CD14-positive monocyte (primary cell): ENCODE measurements at regions of chr6 and their contacts with region 1.

Region 1: DNA sequence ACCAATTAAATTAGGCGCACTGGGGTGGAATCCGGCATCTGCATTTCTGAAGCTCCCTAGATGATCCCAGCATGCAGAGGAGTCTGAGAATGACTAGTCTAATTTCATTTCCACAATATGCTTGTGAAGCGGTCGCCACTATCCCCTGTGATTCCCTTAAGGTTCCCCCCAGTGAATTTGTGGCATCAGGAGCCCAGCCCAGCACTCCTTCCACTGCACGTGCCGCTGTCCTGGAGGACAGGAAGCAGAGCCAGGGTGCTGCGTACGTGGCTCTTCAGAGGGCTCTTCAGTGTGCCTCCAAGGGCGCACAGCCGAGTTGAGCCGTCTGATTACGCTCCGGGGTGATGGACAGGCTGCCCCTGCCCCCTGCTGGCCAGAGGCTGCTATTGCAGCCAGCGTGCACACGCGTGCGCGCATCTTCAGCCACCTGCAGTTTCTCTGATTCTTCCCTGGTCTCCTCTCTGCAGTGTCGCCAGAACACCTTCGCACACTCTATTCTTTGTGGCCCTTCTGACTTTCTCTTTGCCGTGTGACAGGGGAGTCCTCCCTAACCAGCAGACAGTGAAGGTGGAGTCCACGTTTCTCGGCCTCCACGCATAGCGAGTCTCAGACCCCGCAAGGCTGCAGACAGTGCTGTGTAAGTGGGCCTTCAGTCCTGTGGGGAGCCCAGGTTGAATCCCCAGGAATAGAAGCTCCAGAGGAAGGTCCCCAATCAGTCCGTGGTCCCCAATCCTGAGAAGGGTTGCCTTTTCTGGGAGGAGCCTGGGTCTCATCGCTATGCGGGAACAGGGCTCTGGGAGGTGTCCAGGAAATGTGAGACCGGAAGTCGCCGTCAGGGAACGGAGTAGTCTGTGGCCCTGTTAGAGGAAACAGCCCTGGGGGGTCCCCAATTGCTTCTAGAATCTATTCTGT is 16.5 kb upstream of the NCR2 start:
- DNase-seq: peak; percentile 82 to 90 (median 85)
- H3K4me3 ChIP-seq: peak overlapping the region; percentile 27 to 71 (median 29)
- H3K4me3 Mint-ChIP-seq: peak overlapping the region; percentile 74 to 85
- H3K27ac ChIP-seq: peak overlapping the region in 1 of 2 donors; percentile 28
- H3K27ac Mint-ChIP-seq: peak overlapping the region; percentile 24 to 89 (median 75)
- H3K4me1 ChIP-seq: peaks cover 11% of the 10 kb centered on the region in 2 donors
- H3K4me1 Mint-ChIP-seq: peaks cover 13% of the 10 kb centered on the region
- H3K27me3 ChIP-seq: peaks cover 6 to 8% of the 10 kb centered on the region in 2 donors
- H3K27me3 Mint-ChIP-seq: peaks cover 6 to 19% (median 14%) of the 10 kb centered on the region in 3 donors
- CTCF ChIP-seq: peak; percentile 99

Region 2: DNA sequence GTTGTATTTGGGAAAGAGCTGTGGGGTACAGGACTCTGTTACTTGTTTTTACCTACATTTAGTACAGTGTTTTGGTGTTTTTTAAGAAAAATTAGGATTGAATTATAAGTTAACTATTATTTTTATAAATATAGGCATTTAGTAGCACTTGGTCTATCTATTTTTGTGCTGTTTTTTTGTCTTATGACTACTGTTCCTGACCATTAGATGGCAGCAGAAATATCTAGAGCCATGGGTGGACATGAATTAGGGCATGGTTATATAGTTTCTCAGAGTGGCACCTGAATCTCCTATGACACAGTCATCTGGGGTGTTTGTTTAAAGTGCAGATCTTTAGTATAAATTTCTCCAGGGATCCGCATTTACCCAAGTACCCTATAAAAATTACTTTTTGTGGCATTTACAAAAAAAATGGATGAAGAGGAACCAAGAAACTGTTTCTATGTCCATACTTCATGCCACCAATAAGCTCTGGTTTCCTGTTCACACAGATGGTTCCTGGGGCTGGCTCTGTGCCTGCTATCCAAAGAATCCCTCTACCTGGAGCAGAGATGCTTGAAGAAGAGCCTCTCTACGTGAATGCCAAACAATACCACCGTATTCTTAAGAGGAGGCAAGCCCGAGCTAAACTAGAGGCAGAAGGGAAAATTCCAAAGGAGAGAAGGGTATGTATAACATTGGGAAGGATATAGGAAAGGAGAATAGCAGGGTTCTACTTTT is 226.3 kb before region 1 on chr6:
- intact Hi-C with region 1: loop called (anchors 2 to 5 kb)
- DNase-seq: peak; percentile 9 to 41 (median 20)
- H3K4me3 ChIP-seq: no peak overlapping the region
- H3K4me3 Mint-ChIP-seq: no peak overlapping the region
- H3K27ac ChIP-seq: no peak overlapping the region
- H3K27ac Mint-ChIP-seq: peak overlapping the region in 1 of 7 donors; percentile 41
- H3K4me1 ChIP-seq: no peaks in the 10 kb centered on the region
- H3K4me1 Mint-ChIP-seq: no peaks in the 10 kb centered on the region
- H3K27me3 ChIP-seq: no peaks in the 10 kb centered on the region
- H3K27me3 Mint-ChIP-seq: no peaks in the 10 kb centered on the region
- CTCF ChIP-seq: peak; percentile 44

Region 3: DNA sequence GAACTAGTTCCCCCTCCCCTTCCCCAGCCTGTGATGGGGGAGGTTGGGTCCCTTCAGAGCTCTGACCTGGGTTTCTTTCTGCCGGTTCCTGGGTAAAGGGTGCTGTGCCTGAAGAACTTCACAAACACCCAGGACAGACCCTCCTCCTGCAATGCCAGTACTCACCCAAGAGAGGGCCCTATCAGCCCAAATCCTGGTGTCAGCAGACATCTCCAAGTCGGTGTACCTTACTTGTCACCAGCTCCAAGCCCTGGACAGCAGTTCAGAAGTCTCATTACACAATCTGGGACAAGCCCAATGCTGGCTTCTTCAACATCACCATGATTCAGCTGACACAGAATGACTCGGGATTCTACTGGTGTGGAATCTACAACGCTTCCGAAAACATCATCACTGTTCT is 90.3 kb before region 1 on chr6:
- intact Hi-C with region 1: loop called (anchors 5 kb)
- DNase-seq: peak; percentile 82 to 99 (median 87)
- H3K4me3 ChIP-seq: peak overlapping the region in 1 of 3 experiments; percentile 51
- H3K4me3 Mint-ChIP-seq: no peak overlapping the region
- H3K27ac ChIP-seq: peak overlapping the region; percentile 60 to 98
- H3K27ac Mint-ChIP-seq: peak overlapping the region; percentile 85 to 96 (median 90)
- H3K4me1 ChIP-seq: peaks cover 19 to 29% of the 10 kb centered on the region in 2 donors
- H3K4me1 Mint-ChIP-seq: peaks cover 21% of the 10 kb centered on the region
- H3K27me3 ChIP-seq: no peaks in the 10 kb centered on the region
- H3K27me3 Mint-ChIP-seq: peaks cover 1 to 6% (median 2%) of the 10 kb centered on the region in 3 donors
- CTCF ChIP-seq: peak; percentile 66

Region 4: GRCh38 chr6:41278699-41279405 is 40.1 kb before region 1 on chr6:
- intact Hi-C with region 1: loop called (anchors 5 kb)
- DNase-seq: peak; percentile 79 to 85 (median 80)
- H3K4me3 ChIP-seq: peak overlapping the region in 1 of 3 experiments; percentile 77
- H3K4me3 Mint-ChIP-seq: peak overlapping the region; percentile 56 to 61
- H3K27ac ChIP-seq: peak overlapping the region; percentile 32 to 95
- H3K27ac Mint-ChIP-seq: peak overlapping the region; percentile 79 to 100 (median 91)
- H3K4me1 ChIP-seq: peaks cover 96 to 100% of the 10 kb centered on the region in 2 donors
- H3K4me1 Mint-ChIP-seq: peaks cover 99% of the 10 kb centered on the region
- H3K27me3 ChIP-seq: no peaks in the 10 kb centered on the region
- H3K27me3 Mint-ChIP-seq: peaks cover 0 to 5% (median 2%) of the 10 kb centered on the region in 3 donors
- CTCF ChIP-seq: peak; percentile 50